ENCODE measurements at regions of chr1 and their contacts with region 1.

Region 1: GRCh38 chr1:93304716-93305138 is 41.0 kb upstream of the DR1 start:
- DNase-seq: peak; percentile 61
- ATAC-seq: peak; percentile 53
- H3K4me3 Mint-ChIP-seq: no peak overlapping the region
- H3K27ac Mint-ChIP-seq: no peak overlapping the region
- H3K4me1 Mint-ChIP-seq: no peaks in the 10 kb centered on the region
- H3K27me3 Mint-ChIP-seq: no peaks in the 10 kb centered on the region
- CTCF ChIP-seq: peak; percentile 89

Region 2: DNA sequence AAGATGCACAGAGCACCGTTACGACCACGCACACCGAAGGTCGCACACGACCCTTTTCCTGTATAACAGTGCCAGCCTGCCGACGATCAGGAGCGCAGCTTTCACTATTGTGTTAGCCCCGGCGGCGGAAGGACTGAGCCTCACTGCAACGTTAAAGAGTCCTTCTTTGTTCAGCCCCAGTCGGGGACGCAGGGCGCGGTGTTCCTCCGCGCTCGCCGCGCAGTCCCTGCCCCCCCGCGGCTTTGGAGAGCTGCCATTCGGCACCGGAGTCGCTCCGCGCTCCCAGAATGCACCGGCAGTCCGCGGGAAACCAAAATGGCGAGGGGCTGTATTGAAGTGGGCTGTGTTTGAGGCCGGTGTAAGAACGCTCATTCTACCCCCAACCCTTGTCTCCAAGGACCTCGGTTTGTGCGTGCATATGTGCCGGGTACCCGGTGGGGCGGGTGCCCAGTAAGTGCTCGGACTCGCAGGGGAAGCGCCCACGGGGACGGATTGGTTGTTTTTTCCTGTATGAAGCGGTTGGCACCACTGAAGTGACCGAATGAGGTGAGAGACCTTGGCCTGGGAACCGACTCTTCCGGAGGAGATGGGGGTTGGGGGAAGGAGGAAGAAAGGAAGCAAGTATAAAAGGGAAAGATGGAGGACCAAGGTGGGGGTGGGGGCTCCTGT is 225.6 kb before region 1 on chr1 and contains the start of gene MTF2:
- CTCF ChIA-PET with region 1: interaction called, 11 read pairs
- POLR2A ChIA-PET with region 1: no interaction called
- intact Hi-C with region 1: no loop called
- DNase-seq: peak; percentile 96
- ATAC-seq: peak; percentile 93
- H3K4me3 Mint-ChIP-seq: peak within 1 kb of the TSS; percentile 99
- H3K27ac Mint-ChIP-seq: peak within 1 kb of the TSS; percentile 97
- H3K4me1 Mint-ChIP-seq: peaks cover 34% of the 10 kb centered on the region
- H3K27me3 Mint-ChIP-seq: no peaks in the 10 kb centered on the region
- CTCF ChIP-seq: no peak
- total RNA-seq, gene MTF2: 65.0 to 70.9 TPM

Region 3: DNA sequence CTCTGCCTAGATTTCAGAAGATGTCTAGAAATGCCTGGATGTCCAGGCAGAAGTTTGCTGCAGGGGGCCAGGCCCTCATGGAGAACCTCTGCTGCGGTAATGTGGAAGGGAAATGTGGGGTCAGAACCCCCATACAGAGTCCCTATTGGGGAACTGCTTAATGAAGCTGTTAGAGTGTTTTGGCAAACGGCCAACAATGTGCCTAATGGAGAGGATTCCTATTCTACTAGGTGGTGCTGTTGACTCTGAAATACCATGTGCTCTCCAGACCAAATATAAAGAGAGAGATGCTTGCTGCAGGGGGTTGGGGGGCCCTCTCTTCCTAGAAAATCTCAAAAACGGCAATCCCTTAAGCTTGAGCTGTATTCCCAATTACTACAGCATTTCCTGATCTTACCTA is 16.2 kb before region 1 on chr1:
- CTCF ChIA-PET with region 1: interaction called, 27 read pairs
- POLR2A ChIA-PET with region 1: no interaction called
- intact Hi-C with region 1: no loop called
- DNase-seq: no peak
- ATAC-seq: no peak
- H3K4me3 Mint-ChIP-seq: no peak overlapping the region
- H3K27ac Mint-ChIP-seq: no peak overlapping the region
- H3K4me1 Mint-ChIP-seq: no peaks in the 10 kb centered on the region
- H3K27me3 Mint-ChIP-seq: no peaks in the 10 kb centered on the region
- CTCF ChIP-seq: no peak

Region 4: DNA sequence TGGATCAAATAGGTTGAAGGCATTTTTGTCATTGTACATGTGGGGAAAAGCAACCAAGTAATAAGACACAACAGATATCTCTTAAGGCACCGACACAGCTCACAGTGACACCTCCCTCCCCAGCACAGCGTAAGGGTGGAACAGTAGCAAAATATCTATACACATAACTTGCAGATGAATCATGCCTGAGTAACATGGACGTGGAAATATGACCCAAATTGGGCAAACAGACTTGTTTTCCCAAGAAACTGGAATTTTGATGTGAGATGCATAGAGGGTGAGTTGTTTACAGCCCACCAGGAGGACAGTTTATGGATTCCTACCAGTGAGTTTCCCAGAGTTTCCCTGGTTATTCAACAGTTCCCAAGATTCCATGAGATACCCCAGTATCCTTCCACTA is 33.7 kb after region 1 on chr1:
- CTCF ChIA-PET with region 1: interaction called, 22 read pairs
- POLR2A ChIA-PET with region 1: no interaction called
- intact Hi-C with region 1: no loop called
- DNase-seq: no peak
- ATAC-seq: no peak
- H3K4me3 Mint-ChIP-seq: no peak overlapping the region
- H3K27ac Mint-ChIP-seq: no peak overlapping the region
- H3K4me1 Mint-ChIP-seq: peaks cover 3% of the 10 kb centered on the region
- H3K27me3 Mint-ChIP-seq: no peaks in the 10 kb centered on the region
- CTCF ChIP-seq: no peak

Region 5: GRCh38 chr1:93362237-93362636 is 57.5 kb after region 1 on chr1:
- CTCF ChIA-PET with region 1: interaction called, 10 read pairs
- POLR2A ChIA-PET with region 1: no interaction called
- intact Hi-C with region 1: no loop called
- DNase-seq: no peak
- ATAC-seq: no peak
- H3K4me3 Mint-ChIP-seq: no peak overlapping the region
- H3K27ac Mint-ChIP-seq: no peak overlapping the region
- H3K4me1 Mint-ChIP-seq: peaks cover 42% of the 10 kb centered on the region
- H3K27me3 Mint-ChIP-seq: no peaks in the 10 kb centered on the region
- CTCF ChIP-seq: no peak

Region 6: DNA sequence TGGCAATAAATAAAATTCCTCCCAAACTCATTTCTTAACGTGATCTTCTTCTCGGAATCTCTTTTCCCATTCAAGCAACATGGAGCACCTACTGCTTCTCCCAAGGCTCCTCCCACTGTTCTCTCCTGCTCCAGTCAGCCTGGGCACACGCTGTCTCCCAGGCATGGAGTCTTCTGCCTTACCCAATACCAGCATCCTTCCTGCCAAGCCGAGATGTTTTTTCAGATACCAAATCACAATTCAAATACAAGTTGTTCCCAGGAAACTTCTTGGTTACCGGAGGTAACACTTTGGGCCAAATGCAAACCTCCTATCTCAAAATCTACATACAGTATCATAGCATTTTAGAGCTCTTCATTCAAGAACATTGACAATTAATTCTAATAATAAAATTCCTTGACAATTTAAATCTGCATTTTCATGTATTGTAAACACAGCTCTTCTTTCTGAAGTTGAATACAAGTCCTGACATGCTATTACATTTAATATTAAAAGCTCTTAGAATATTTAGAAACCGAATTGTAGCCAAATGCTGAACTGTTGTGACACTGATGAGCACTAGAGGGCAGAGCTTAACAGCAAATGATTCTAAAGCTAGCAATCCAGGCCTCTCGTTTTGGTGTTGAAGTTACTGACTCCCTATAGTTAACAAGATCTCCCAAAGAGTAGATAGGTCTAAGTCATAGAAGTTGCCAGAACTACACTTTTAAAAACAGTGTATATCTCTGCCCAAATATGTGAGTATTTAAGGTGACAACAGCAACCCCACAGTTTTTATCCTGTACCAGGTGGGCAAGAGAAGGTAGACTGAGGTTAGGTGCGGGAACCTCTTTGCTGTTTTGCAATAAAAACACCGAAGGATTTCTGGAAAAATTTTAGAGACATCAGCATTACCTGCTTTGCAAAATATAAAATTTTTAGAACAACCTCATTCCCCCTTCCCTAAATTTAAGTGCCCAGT is 324.7 kb after region 1 on chr1:
- CTCF ChIA-PET with region 1: interaction called, 14 read pairs
- POLR2A ChIA-PET with region 1: no interaction called
- intact Hi-C with region 1: no loop called
- DNase-seq: peak; percentile 57
- ATAC-seq: peak; percentile 77
- H3K4me3 Mint-ChIP-seq: no peak overlapping the region
- H3K27ac Mint-ChIP-seq: no peak overlapping the region
- H3K4me1 Mint-ChIP-seq: no peaks in the 10 kb centered on the region
- H3K27me3 Mint-ChIP-seq: no peaks in the 10 kb centered on the region
- CTCF ChIP-seq: peak; percentile 90